Mammary epithelial cell (primary cell): ENCODE measurements at regions of chr4 and their contacts with region 1.

Region 1: DNA sequence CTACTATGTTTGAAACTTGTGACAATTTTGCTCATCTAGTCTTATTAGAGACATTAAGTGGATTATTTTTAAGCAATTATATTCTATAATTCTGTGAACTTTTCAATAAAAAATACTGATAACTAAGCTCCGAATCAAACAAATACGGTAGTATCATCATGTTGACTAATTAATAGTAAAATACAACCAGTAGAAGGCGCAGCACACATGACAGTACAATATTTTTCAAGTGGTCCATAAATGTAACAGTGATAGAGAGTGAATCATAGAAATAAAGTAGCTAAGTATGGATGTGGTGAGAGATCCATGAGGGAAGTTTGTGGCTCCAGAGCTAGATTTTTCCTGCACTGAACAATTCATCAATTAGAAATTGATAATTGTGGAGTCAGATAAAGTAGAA is 666.2 kb downstream of the KCTD8 start:
- DNase-seq: no peak
- H3K4me3 ChIP-seq: no peak overlapping the region
- H3K27ac ChIP-seq: no peak overlapping the region
- H3K4me1 ChIP-seq: no peaks in the 10 kb centered on the region
- H3K27me3 ChIP-seq: peaks cover 3% of the 10 kb centered on the region
- CTCF ChIP-seq: no peak

Region 2: DNA sequence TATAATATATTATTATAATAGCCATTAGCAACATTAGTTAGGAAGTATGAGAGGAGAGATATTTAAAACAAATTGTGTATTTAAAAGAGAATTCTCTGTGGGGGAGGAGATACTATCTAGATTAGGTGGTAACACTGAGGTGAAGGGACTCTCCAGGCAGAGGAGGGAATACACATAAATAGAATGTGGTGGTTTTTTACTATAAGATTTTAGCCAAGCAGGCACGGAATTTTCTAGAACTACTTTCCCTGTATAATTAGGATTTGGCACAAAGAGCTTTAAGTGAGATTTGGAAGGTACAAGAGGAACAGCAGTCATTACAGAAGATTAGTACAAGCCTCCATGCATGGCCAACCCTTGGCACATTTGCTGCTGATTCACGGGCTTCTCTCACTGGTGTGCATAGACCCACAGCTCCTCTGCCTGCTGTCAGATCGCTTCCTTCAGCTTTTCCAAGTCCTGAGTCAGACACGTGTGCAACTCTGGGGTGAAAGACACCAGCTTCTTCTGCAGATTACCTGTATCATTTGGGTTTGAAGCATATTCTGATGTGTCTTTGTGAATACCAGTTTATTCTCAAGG is 19.3 kb before region 1 on chr4:
- CTCF ChIA-PET with region 1: interaction called, 13 read pairs
- dilution Hi-C with region 1: no loop called
- in situ Hi-C with region 1: no loop called
- intact Hi-C with region 1: no loop called
- DNase-seq: no peak
- H3K4me3 ChIP-seq: no peak overlapping the region
- H3K27ac ChIP-seq: no peak overlapping the region
- H3K4me1 ChIP-seq: no peaks in the 10 kb centered on the region
- H3K27me3 ChIP-seq: no peaks in the 10 kb centered on the region
- CTCF ChIP-seq: no peak

Region 3: DNA sequence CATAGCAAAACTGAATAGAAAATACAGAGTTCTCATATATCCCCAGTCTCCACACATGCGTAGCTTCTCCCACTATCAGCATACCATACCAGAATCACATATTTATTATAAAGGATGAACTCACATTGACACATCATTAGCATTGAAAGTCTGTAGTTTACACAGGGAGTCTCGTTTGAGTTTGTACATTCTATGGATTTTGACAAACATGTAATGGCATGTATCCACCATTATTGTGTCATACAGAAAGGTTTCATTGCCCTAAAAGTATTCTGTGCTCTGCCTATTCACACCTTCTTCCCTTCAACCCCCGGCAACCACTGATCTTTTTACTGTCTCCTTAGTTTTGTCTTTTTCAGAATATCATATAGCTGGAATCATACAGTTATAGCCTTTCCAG is 103.8 kb after region 1 on chr4:
- CTCF ChIA-PET with region 1: no interaction called
- dilution Hi-C with region 1: no loop called
- in situ Hi-C with region 1: no loop called
- intact Hi-C with region 1: no loop called
- DNase-seq: no peak
- H3K4me3 ChIP-seq: no peak overlapping the region
- H3K27ac ChIP-seq: no peak overlapping the region
- H3K4me1 ChIP-seq: no peaks in the 10 kb centered on the region
- H3K27me3 ChIP-seq: no peaks in the 10 kb centered on the region
- CTCF ChIP-seq: no peak